ENCODE measurements at regions of chr11 and their contacts with region 1.

Region 1: GRCh38 chr11:32052218-32052617 is 38.7 kb upstream of the RCN1 start:
- DNase-seq: no peak
- ATAC-seq: peak; percentile 87
- H3K4me3 ChIP-seq: no peak overlapping the region
- H3K27ac ChIP-seq: no peak overlapping the region
- H3K4me1 ChIP-seq: no peaks in the 10 kb centered on the region
- H3K27me3 ChIP-seq: no peaks in the 10 kb centered on the region
- CTCF ChIP-seq: peak; percentile 63 to 77 (median 64)
- EP300 ChIP-seq: no peak
- POLR2A ChIP-seq: no peak
- RAD21 ChIP-seq: peak; percentile 84

Region 2: GRCh38 chr11:32039149-32039548 is 13.1 kb before region 1 on chr11:
- CTCF ChIA-PET with region 1: interaction called, 23 read pairs
- POLR2A ChIA-PET with region 1: no interaction called
- RAD21 ChIA-PET with region 1: interaction called, 3 read pairs
- SMC1A ChIA-PET with region 1: interaction called, 9 read pairs
- in situ Hi-C with region 1: no loop called
- intact Hi-C with region 1: no loop called
- DNase-seq: no peak
- ATAC-seq: peak; percentile 45
- H3K4me3 ChIP-seq: no peak overlapping the region
- H3K27ac ChIP-seq: no peak overlapping the region
- H3K4me1 ChIP-seq: no peaks in the 10 kb centered on the region
- H3K27me3 ChIP-seq: no peaks in the 10 kb centered on the region
- CTCF ChIP-seq: no peak
- EP300 ChIP-seq: no peak
- POLR2A ChIP-seq: no peak
- RAD21 ChIP-seq: no peak

Region 3: GRCh38 chr11:32071811-32072210 is 19.6 kb after region 1 on chr11:
- CTCF ChIA-PET with region 1: interaction called, 10 read pairs
- POLR2A ChIA-PET with region 1: interaction called, 3 read pairs
- RAD21 ChIA-PET with region 1: no interaction called
- SMC1A ChIA-PET with region 1: interaction called, 4 read pairs
- in situ Hi-C with region 1: no loop called
- intact Hi-C with region 1: no loop called
- DNase-seq: no peak
- ATAC-seq: no peak
- H3K4me3 ChIP-seq: no peak overlapping the region
- H3K27ac ChIP-seq: no peak overlapping the region
- H3K4me1 ChIP-seq: peaks cover 5% of the 10 kb centered on the region
- H3K27me3 ChIP-seq: no peaks in the 10 kb centered on the region
- CTCF ChIP-seq: peak in 2 of 3 experiments; percentile 7 to 15; a peak in 1 of 6 replicates
- EP300 ChIP-seq: no peak
- POLR2A ChIP-seq: no peak
- RAD21 ChIP-seq: no peak

Region 4: DNA sequence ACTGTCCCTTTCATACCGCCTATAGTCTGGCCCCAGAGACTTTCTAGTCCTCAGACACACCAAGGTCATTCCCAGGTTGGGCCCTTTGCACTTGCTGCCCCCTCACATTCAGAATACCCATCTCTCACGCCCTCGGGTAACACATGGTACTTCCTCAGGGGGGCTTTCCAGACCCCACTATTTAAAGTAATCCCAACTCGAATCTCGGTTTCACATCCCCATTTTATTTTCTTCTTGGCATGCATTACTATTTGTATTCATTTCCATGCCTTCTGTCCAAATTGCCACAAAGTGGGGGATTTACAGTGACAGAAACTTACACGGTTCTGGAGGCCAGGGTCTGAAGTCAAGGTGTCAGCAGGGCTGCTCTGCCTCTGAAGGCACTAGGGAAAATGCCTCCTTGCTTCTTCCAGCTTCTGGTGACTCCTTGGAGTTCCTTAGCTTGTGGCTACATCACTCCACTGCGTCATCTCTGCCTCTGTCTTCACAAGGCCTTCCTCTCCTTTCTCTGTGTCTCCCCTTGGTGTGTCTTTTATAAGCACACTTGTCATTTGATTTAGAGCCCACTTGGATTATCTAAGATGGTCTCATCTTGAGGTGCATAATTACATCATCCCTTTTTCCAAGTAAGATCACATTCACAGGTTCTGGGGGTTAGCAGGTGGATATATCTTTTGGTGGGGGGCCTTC is 53.8 kb after region 1 on chr11:
- CTCF ChIA-PET with region 1: interaction called, 7 read pairs
- POLR2A ChIA-PET with region 1: no interaction called
- RAD21 ChIA-PET with region 1: interaction called, 3 read pairs
- SMC1A ChIA-PET with region 1: interaction called, 4 read pairs
- in situ Hi-C with region 1: no loop called
- intact Hi-C with region 1: loop called (anchors 2 kb)
- DNase-seq: peak; percentile 81
- ATAC-seq: peak; percentile 91
- H3K4me3 ChIP-seq: peak overlapping the region; percentile 33
- H3K27ac ChIP-seq: peak overlapping the region; percentile 82
- H3K4me1 ChIP-seq: peaks cover 22% of the 10 kb centered on the region
- H3K27me3 ChIP-seq: no peaks in the 10 kb centered on the region
- CTCF ChIP-seq: no peak
- EP300 ChIP-seq: peak; percentile 82
- POLR2A ChIP-seq: no peak; the same call in 1 of the 2 replicates
- RAD21 ChIP-seq: no peak

Region 5: GRCh38 chr11:32162351-32162750 is 110.1 kb after region 1 on chr11:
- CTCF ChIA-PET with region 1: interaction called, 41 read pairs
- POLR2A ChIA-PET with region 1: no interaction called
- RAD21 ChIA-PET with region 1: interaction called, 4 read pairs
- SMC1A ChIA-PET with region 1: interaction called, 10 read pairs
- in situ Hi-C with region 1: no loop called
- intact Hi-C with region 1: no loop called
- DNase-seq: no peak
- ATAC-seq: no peak
- H3K4me3 ChIP-seq: no peak overlapping the region
- H3K27ac ChIP-seq: no peak overlapping the region
- H3K4me1 ChIP-seq: no peaks in the 10 kb centered on the region
- H3K27me3 ChIP-seq: no peaks in the 10 kb centered on the region
- CTCF ChIP-seq: no peak
- EP300 ChIP-seq: no peak
- POLR2A ChIP-seq: no peak
- RAD21 ChIP-seq: no peak

Region 6: GRCh38 chr11:32297611-32298011 is 245.4 kb after region 1 on chr11:
- CTCF ChIA-PET with region 1: interaction called, 4 read pairs
- POLR2A ChIA-PET with region 1: no interaction called
- RAD21 ChIA-PET with region 1: interaction called, 7 read pairs
- SMC1A ChIA-PET with region 1: no interaction called
- in situ Hi-C with region 1: no loop called
- intact Hi-C with region 1: loop called (anchors 10 kb)
- DNase-seq: no peak
- ATAC-seq: peak; percentile 64
- H3K4me3 ChIP-seq: no peak overlapping the region
- H3K27ac ChIP-seq: no peak overlapping the region
- H3K4me1 ChIP-seq: no peaks in the 10 kb centered on the region
- H3K27me3 ChIP-seq: no peaks in the 10 kb centered on the region; a peak in 2 of 4 replicates
- CTCF ChIP-seq: peak; percentile 5 to 37 (median 26); a peak in 1 of 6 replicates
- EP300 ChIP-seq: no peak
- POLR2A ChIP-seq: no peak
- RAD21 ChIP-seq: peak; percentile 37

Measured in GM12878 (cell line).